Panc1 (cell line): ENCODE measurements at regions of chr1 and their contacts with region 1.

Region 1: DNA sequence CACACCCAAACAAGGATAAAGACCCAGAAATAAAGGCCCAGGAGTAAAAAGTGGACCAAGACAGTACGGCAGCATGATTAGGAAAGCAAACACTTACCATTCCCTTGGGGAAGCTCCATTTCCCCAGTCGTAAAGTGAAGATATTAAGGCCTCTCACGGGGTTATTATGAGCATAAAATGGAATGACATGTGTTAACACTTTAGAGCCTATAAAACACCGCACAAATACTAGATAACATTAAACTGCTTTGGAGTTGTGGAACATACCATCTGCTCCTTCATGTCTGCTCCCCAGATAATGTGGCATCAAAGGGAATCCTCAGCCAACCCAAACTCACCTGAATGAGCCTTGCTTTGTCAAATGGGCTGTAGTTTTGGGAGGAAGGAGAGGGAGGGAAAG is 8.9 kb upstream of the ITLN2 start:
- DNase-seq: no peak
- ATAC-seq: no peak
- H3K4me3 ChIP-seq: no peak overlapping the region
- H3K27ac ChIP-seq: no peak overlapping the region
- H3K4me1 ChIP-seq: no peaks in the 10 kb centered on the region
- H3K27me3 ChIP-seq: no peaks in the 10 kb centered on the region
- CTCF ChIP-seq: no peak

Region 2: GRCh38 chr1:161083743-161084571 is 120.4 kb after region 1 on chr1:
- CTCF ChIA-PET with region 1: interaction called, 15 read pairs
- POLR2A ChIA-PET with region 1: no interaction called
- in situ Hi-C with region 1: no loop called
- intact Hi-C with region 1: no loop called
- DNase-seq: no peak
- ATAC-seq: no peak
- H3K4me3 ChIP-seq: no peak overlapping the region
- H3K27ac ChIP-seq: no peak overlapping the region
- H3K4me1 ChIP-seq: peaks cover 4% of the 10 kb centered on the region; the same call in 1 of the 2 replicates
- H3K27me3 ChIP-seq: no peaks in the 10 kb centered on the region
- CTCF ChIP-seq: no peak